CD14-positive monocyte (primary cell): ENCODE measurements at regions of chr4 and their contacts with region 1.

Region 1: DNA sequence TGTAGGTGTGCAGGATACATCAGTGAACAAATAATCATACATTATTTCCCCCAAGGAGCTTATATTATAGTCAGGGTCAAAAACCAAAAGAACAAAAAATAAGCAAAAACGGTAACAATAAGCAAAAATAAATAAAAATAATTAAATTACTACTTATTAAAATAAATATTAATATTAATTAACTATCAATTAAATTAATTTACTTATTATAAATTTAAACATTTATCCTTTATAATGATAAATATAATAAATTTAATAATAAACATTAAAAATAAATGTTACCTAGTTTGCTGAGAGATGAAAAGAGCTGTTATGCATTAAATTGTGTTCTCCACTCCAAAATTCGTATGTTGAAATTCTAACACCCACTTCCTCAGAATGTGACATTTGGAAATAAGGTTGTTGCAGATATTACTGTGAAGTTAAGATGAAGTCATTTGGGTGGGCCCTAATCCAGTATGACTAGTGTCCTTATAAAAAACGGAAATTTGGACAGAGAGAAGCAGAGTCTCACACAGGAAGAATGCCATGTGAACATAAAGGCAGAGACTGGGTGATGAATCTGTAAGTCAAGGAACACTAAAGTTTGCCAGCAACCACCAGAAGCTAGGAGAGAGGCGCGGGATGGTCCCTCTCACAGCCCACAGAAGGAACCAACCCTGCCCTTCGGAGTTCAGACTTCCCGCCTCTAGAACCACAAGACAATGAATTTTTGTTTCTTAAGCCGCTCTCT is 67.2 kb upstream of the IBSP start:
- DNase-seq: peak; percentile 79 to 87 (median 81)
- H3K4me3 ChIP-seq: no peak overlapping the region
- H3K4me3 Mint-ChIP-seq: peak overlapping the region in 1 of 2 donors; percentile 55
- H3K27ac ChIP-seq: peak overlapping the region; percentile 69 to 83
- H3K27ac Mint-ChIP-seq: peak overlapping the region; percentile 87 to 96 (median 90)
- H3K4me1 ChIP-seq: peaks cover 12% of the 10 kb centered on the region in 2 donors
- H3K4me1 Mint-ChIP-seq: peaks cover 12% of the 10 kb centered on the region
- H3K27me3 ChIP-seq: no peaks in the 10 kb centered on the region
- H3K27me3 Mint-ChIP-seq: peaks cover 0 to 5% (median 0%) of the 10 kb centered on the region in 3 donors
- CTCF ChIP-seq: no peak

Region 2: DNA sequence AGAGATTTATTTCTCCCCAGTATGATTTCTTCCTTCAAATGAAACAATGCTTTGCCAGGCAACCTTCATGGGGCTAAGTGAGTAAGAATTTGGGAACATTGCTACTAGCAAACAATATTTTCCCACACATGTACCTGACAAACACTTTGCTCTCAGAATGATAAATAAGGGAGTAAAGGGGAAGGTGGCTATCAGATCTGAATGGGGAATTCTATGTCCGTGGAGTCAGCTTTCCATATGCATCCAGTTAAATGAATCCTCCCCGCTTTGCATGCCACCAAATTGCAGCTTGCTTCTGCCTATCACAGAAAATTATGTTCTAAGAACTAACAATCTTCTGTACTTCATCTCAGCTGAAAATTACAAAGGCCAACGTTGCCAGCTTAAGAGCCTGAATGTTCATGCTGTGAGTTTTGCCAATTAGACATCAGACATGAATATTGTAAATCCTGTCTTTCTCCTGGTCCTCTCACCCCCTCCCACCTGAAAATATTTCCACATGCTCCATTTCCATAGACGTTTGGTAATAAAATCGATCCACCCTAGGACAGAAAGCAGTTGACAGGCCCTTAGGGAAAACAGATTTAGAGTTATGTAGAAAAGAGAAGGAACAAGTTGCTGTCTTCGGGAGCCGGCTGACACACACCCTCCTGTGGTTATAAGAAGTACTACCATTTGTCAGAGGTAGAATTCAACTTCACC is 106.8 kb after region 1 on chr4:
- intact Hi-C with region 1: loop called in 1 of 2 experiments (anchors 10 kb)
- DNase-seq: peak; percentile 26 to 58 (median 50)
- H3K4me3 ChIP-seq: no peak overlapping the region
- H3K4me3 Mint-ChIP-seq: no peak overlapping the region
- H3K27ac ChIP-seq: no peak overlapping the region
- H3K27ac Mint-ChIP-seq: no peak overlapping the region
- H3K4me1 ChIP-seq: peaks cover 8 to 9% of the 10 kb centered on the region in 2 donors
- H3K4me1 Mint-ChIP-seq: peaks cover 12% of the 10 kb centered on the region
- H3K27me3 ChIP-seq: no peaks in the 10 kb centered on the region
- H3K27me3 Mint-ChIP-seq: peaks cover 0 to 10% (median 5%) of the 10 kb centered on the region in 3 donors
- CTCF ChIP-seq: peak; percentile 86

Region 3: DNA sequence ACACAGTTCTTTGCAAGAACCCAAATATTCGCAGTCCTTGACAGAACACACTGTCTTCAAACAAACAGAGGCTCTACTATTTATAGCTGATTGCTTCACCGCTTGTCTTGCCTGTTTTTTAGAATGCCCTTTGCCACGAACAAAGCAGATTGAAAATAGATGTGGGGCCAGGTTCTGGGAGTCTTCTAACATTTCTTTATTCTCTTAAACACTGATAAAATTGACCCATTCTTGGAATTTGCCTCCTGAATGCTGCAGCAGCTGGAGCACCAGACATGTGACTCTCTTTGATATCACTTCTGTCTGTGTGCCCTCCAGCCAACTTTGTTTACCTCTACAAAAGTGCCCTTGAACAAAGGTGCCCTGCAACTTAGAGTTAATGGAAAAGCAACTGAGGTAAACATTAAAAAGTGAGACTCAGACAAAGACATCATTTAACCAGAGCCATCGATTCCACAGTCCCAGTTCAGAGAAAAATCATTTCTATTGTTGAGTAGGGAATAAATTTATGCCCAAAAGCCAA is 179.1 kb after region 1 on chr4:
- intact Hi-C with region 1: no loop called
- DNase-seq: no peak
- H3K4me3 ChIP-seq: no peak overlapping the region
- H3K4me3 Mint-ChIP-seq: peak overlapping the region in 1 of 2 donors; percentile 72
- H3K27ac ChIP-seq: no peak overlapping the region
- H3K27ac Mint-ChIP-seq: no peak overlapping the region
- H3K4me1 ChIP-seq: peaks cover 14 to 17% of the 10 kb centered on the region in 2 donors
- H3K4me1 Mint-ChIP-seq: peaks cover 17% of the 10 kb centered on the region
- H3K27me3 ChIP-seq: no peaks in the 10 kb centered on the region
- H3K27me3 Mint-ChIP-seq: peaks cover 0 to 4% (median 0%) of the 10 kb centered on the region in 3 donors
- CTCF ChIP-seq: no peak